ENCODE measurements at regions of chr12 and their contacts with region 1.

Region 1: DNA sequence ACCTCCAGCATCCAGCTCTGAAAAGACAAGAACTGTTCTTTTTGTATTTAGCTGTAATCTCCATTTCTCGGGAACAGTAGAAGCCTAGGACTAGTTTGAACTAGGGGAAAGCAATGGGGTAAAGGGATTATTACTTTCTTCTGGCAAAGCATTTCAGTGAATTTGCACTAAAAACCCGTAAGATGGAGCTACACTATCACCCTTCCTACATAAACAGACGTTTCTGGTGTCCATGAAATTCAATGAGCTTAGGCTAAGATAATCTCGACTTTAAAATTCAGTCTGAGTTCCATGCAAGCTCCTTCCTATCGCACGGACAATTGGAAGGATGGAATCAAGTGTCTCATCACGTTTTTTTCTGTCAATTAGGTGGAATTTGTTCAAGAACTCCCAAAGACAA is 24.0 kb downstream of the ACSM4 start:
- DNase-seq: no peak
- ATAC-seq: no peak

Region 2: GRCh38 chr12:7395950-7396349 is 68.0 kb after region 1 on chr12:
- intact Hi-C with region 1: loop called in 1 of 2 experiments (anchors 5 kb)
- DNase-seq: no peak
- ATAC-seq: no peak